ENCODE measurements at regions of chr18 and their contacts with region 1.

Region 1: DNA sequence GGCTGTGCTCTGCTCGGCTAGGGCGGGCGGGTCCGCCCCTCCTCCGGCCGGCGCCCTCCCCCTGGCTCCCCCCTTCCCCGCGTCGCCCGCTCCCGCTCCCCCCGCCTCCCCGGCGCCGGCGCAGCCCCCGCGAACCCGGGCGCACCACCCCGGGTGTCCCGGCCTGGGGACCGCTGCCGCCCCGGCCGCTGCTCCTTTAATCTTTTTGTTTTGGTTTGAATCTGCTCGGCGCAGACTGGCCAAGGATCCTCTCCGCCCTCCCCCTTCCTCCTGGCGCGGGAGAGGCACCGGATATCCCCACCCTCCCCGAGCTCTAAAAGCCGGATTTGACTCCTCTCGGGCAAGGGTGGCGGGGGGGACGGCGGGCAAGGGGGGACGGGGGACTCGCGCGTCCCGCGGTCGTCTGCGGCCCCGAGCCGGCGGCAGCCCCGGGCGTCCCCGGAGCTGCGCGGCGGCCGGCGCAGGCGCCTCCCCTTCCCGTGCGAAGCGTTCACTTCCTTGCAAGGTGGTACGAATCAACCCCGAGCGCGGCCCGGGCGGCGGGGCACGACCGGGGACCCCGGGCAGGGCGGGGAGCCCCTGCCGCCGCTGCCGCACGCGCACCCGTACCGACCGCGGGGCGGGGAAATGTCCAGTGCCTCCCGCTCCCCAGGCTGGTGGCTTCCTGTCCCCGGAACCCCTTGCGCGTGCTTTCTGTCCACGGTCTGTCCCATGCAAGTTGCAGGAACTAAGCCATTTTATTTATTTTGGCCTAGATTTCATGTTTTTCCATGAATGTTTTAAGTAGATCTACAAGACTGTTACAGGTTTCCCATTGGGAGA is at the start of gene PTGR3:
- DNase-seq: peak; percentile 91
- H3K4me3 Mint-ChIP-seq: peak within 1 kb of the TSS; percentile 99
- H3K27ac Mint-ChIP-seq: peak within 1 kb of the TSS; percentile 98
- H3K4me1 Mint-ChIP-seq: peaks cover 56% of the 10 kb centered on the region
- H3K27me3 Mint-ChIP-seq: no peaks in the 10 kb centered on the region
- total RNA-seq, gene PTGR3: 29.6 to 30.2 TPM

Region 2: GRCh38 chr18:74147779-74148542 is 1061.4 kb before region 1 on chr18 and contains the starts of genes FBXO15 and TIMM21:
- CTCF ChIA-PET with region 1: no interaction called
- POLR2A ChIA-PET with region 1: no interaction called
- intact Hi-C with region 1: loop called (anchors 1 kb)
- DNase-seq: peak; percentile 97
- H3K4me3 Mint-ChIP-seq: peak within 1 kb of the TSS; percentile 95
- H3K27ac Mint-ChIP-seq: peak within 1 kb of the TSS; percentile 99
- H3K4me1 Mint-ChIP-seq: peaks cover 40% of the 10 kb centered on the region
- H3K27me3 Mint-ChIP-seq: peaks cover 2% of the 10 kb centered on the region
- total RNA-seq, gene FBXO15: 0.67 to 0.75 TPM
- total RNA-seq, gene TIMM21: 37.1 to 38.3 TPM

Region 3: GRCh38 chr18:74896390-74896991 is 312.8 kb before region 1 on chr18:
- CTCF ChIA-PET with region 1: no interaction called
- POLR2A ChIA-PET with region 1: no interaction called
- intact Hi-C with region 1: loop called (anchors 5 kb)
- DNase-seq: peak; percentile 56
- H3K4me3 Mint-ChIP-seq: no peak overlapping the region
- H3K27ac Mint-ChIP-seq: no peak overlapping the region
- H3K4me1 Mint-ChIP-seq: peaks cover 4% of the 10 kb centered on the region
- H3K27me3 Mint-ChIP-seq: no peaks in the 10 kb centered on the region

Region 4: DNA sequence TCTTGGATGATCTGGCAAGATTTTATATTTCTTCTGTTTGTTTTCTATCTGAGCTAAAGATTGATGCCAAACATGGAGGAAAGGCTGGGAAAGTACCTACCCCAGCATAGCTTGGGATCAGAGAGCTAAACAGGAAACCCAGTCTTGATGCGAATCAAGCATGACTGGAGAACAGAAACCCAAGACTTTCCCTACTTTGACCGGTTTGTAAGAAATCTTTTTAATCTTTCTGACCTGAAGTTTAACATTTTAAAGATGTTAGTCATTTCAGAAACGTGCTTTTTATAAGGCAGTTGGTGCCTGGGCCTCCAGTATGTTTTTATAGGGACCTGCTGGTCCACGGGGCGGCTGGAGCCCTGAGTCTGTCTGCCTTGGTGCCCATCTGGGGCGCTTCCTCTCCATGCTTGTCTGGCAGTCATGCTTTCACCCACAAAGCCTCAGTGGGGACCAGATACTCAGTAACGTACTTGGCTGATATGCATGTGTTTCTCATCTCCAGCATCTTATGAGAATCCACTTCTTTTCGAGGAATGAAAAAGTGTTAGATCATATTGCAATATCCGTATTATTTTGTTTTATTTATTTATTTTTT is 266.9 kb before region 1 on chr18:
- CTCF ChIA-PET with region 1: no interaction called
- POLR2A ChIA-PET with region 1: no interaction called
- intact Hi-C with region 1: no loop called
- DNase-seq: peak; percentile 61
- H3K4me3 Mint-ChIP-seq: peak overlapping the region; percentile 35
- H3K27ac Mint-ChIP-seq: no peak overlapping the region
- H3K4me1 Mint-ChIP-seq: peaks cover 16% of the 10 kb centered on the region
- H3K27me3 Mint-ChIP-seq: no peaks in the 10 kb centered on the region

Region 5: DNA sequence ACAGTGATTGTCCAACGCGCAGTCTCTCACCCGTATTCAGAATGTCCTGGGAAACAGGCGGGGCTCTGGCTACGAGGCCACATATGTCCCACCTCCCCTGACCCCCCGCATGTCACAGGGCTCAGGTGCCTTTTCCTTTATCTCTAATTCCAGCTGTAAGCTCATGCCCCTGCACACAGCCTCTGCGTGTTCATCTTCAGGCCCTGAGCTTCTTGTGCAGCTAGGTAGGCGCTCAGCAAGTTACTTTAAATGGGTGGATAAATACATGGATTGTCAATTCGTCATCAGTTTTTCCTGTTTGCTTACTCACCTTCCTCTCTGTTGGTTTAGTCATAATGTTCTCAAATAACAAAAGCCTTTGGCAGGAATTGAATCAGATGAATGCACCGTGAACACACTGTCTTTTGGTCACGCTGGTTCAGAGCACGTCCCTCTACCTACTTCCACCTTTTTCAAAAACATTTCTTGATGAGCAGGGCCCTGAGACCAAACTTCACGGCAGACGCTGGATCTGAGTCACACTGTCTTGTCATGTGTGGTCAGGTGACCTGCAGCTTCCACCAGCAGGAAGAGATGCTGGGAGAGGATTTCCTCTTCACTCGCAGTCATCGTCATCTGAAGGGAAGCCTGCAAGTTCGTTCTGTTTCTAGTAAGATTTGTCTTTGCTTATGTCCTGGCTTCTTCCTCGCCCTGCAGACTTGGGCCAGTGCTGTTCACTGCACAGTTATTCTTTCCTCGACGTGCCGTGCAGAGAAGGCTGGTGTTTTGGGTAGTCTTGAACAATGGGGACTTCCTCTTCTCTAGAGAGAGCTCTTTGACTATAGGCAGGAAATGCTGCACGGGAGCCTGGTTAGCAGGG is 138.5 kb before region 1 on chr18:
- CTCF ChIA-PET with region 1: no interaction called
- POLR2A ChIA-PET with region 1: interaction called, 3 read pairs
- intact Hi-C with region 1: loop called (anchors 1 kb)
- DNase-seq: peak; percentile 87
- H3K4me3 Mint-ChIP-seq: peak overlapping the region; percentile 65
- H3K27ac Mint-ChIP-seq: peak overlapping the region; percentile 93
- H3K4me1 Mint-ChIP-seq: peaks cover 40% of the 10 kb centered on the region
- H3K27me3 Mint-ChIP-seq: no peaks in the 10 kb centered on the region

Region 6: GRCh38 chr18:75125382-75126331 is 83.7 kb before region 1 on chr18:
- CTCF ChIA-PET with region 1: no interaction called
- POLR2A ChIA-PET with region 1: no interaction called
- intact Hi-C with region 1: no loop called
- DNase-seq: no peak
- H3K4me3 Mint-ChIP-seq: no peak overlapping the region
- H3K27ac Mint-ChIP-seq: no peak overlapping the region
- H3K4me1 Mint-ChIP-seq: peaks cover 7% of the 10 kb centered on the region
- H3K27me3 Mint-ChIP-seq: peaks cover 3% of the 10 kb centered on the region

Region 7: GRCh38 chr18:75183531-75183930 is 25.8 kb before region 1 on chr18:
- CTCF ChIA-PET with region 1: no interaction called
- POLR2A ChIA-PET with region 1: no interaction called
- intact Hi-C with region 1: no loop called
- DNase-seq: no peak
- H3K4me3 Mint-ChIP-seq: no peak overlapping the region
- H3K27ac Mint-ChIP-seq: no peak overlapping the region
- H3K4me1 Mint-ChIP-seq: no peaks in the 10 kb centered on the region
- H3K27me3 Mint-ChIP-seq: no peaks in the 10 kb centered on the region

Region 8: GRCh38 chr18:75261430-75262223 is 52.3 kb after region 1 on chr18:
- CTCF ChIA-PET with region 1: no interaction called
- POLR2A ChIA-PET with region 1: interaction called, 6 read pairs
- intact Hi-C with region 1: loop called (anchors 5 kb)
- DNase-seq: peak; percentile 35
- H3K4me3 Mint-ChIP-seq: no peak overlapping the region
- H3K27ac Mint-ChIP-seq: peak overlapping the region; percentile 75
- H3K4me1 Mint-ChIP-seq: peaks cover 33% of the 10 kb centered on the region
- H3K27me3 Mint-ChIP-seq: no peaks in the 10 kb centered on the region

Region 9: GRCh38 chr18:76492669-76493212 is 1283.4 kb after region 1 on chr18:
- CTCF ChIA-PET with region 1: no interaction called
- POLR2A ChIA-PET with region 1: no interaction called
- intact Hi-C with region 1: loop called (anchors 5 kb)
- DNase-seq: peak; percentile 99
- H3K4me3 Mint-ChIP-seq: peak overlapping the region; percentile 84
- H3K27ac Mint-ChIP-seq: peak overlapping the region; percentile 42
- H3K4me1 Mint-ChIP-seq: peaks cover 33% of the 10 kb centered on the region
- H3K27me3 Mint-ChIP-seq: peaks cover 60% of the 10 kb centered on the region